ENCODE measurements at regions of chr17 and their contacts with region 1.

Region 1: GRCh38 chr17:781805-782731 is at the starts of genes GLOD4 and MRM3:
- DNase-seq: peak; percentile 99
- ATAC-seq: peak; percentile 96
- H3K4me3 Mint-ChIP-seq: peak within 1 kb of the TSS; percentile 98
- H3K27ac Mint-ChIP-seq: peak within 1 kb of the TSS; percentile 94
- H3K4me1 Mint-ChIP-seq: peaks cover 38% of the 10 kb centered on the region
- H3K27me3 Mint-ChIP-seq: no peaks in the 10 kb centered on the region
- CTCF ChIP-seq: no peak
- total RNA-seq, gene GLOD4: 51.4 and 51.9 TPM in 2 replicates
- total RNA-seq, gene MRM3: 23.3 and 26.3 TPM in 2 replicates

Region 2: DNA sequence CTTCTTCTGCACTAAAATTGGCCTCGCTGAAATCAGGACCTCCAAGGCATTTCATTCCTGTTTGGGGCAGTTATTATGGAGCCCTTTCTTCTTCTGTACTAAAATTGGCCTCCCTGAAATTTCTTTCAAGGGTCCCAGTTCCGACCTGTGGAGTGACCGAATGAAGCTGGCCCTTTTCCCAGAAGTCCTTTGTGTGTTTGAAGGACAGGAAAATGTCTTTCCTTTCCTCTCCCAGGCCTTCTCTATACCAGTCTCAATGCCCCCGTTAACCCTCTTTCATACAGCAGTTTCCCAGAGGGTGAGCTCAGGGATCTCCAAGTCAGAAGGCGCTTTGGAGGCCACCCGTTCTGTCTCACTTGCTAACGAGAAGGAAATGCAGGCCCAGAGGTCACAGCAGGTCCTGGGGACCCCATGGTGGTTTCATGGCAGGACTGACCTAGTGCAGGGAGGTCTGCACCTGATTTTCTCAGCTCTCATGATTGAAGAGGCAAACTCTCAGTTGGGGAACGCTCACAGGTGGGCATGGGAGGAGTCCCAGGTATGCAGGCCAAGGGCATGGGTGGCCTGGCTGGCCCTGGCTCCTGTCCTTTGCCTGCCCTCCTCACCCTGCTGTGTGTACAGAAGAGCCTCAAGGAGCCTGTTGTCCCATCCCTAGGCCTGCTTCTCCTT is 563.5 kb before region 1 on chr17:
- CTCF ChIA-PET with region 1: no interaction called
- POLR2A ChIA-PET with region 1: no interaction called
- intact Hi-C with region 1: loop called (anchors 10 kb)
- DNase-seq: no peak
- ATAC-seq: no peak
- H3K4me3 Mint-ChIP-seq: no peak overlapping the region
- H3K27ac Mint-ChIP-seq: no peak overlapping the region
- H3K4me1 Mint-ChIP-seq: peaks cover 8% of the 10 kb centered on the region
- H3K27me3 Mint-ChIP-seq: no peaks in the 10 kb centered on the region
- CTCF ChIP-seq: no peak

Region 3: DNA sequence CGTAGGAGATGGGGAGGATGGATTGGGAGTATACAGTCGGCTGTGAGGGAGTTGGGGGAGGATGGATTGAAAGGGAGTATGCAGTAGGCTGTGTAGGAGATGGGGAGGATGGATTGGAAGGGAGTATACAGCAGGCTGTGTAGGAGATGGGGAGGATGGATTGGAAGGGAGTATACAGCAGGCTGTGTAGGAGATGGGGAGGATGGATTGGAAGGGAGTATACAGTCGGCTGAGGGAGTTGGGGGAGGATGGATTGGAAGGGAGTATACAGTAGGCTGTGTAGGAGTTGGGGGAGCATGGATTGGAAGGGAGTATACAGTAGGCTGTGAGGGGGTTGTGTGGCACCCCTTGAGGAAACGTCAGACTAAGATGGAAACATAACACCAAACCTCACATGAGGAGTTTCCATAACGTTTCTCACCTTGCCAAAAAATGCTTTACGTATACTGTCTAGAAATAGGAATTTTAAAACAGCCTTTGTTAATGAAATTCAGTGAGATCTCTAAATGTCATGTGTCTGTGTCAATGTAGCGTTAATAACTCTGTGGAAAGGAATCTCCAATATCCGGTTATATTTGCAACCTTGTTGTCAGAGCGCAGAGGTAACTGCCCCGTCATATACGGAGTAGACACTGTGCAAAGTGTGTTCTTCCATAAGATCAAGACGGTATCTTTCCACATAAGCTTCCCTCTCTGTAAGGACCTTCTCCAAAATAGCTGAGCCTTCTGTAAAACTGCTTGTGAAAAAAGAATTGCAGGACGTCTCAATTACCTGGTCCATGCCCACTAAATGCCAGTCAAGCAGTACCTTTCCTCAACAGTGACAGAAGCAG is 61.1 kb before region 1 on chr17:
- CTCF ChIA-PET with region 1: no interaction called
- POLR2A ChIA-PET with region 1: interaction called, 10 read pairs
- intact Hi-C with region 1: no loop called
- DNase-seq: no peak
- ATAC-seq: no peak
- H3K4me3 Mint-ChIP-seq: no peak overlapping the region
- H3K27ac Mint-ChIP-seq: no peak overlapping the region
- H3K4me1 Mint-ChIP-seq: peaks cover 3% of the 10 kb centered on the region
- H3K27me3 Mint-ChIP-seq: no peaks in the 10 kb centered on the region
- CTCF ChIP-seq: no peak

Region 4: DNA sequence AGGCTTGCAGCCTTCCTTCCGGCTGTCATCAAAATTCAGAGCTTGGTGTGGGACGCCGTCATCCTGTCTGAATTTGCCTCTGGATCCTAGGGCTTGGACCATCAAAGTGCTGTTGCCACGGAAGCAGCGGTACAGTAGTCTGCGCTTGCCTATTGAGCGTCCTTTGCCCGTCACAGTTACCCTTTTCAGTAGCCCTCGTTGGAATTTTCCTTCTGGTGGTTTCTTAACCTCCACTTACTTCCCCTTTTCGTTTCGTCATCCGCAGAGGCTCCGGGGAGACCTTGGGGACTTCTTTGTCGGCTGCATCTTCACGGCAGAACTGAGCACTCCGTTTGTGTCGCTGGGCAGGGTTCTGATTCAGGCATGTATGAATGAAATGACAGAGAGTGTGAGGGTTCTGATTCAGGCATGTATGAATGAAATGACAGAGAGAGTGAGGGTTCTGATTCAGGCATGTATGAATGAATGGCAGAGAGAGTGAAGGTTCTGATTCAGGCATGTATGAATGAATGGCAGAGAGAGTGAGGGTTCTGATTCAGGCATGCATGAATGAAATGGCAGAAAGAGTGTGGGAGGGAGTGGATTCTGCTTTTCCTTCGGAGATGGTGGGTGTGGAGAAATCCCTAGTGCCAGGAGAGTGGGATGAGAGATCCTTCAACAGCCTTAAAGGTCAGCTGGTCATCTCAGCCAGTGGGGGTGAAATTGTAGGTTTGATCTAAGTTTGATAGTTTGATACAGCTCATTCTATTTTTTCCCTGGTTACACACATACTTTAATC is 41.6 kb before region 1 on chr17:
- CTCF ChIA-PET with region 1: no interaction called
- POLR2A ChIA-PET with region 1: interaction called, 3 read pairs
- intact Hi-C with region 1: loop called (anchors 1 kb)
- DNase-seq: peak; percentile 66
- ATAC-seq: peak; percentile 95
- H3K4me3 Mint-ChIP-seq: peak overlapping the region; percentile 76
- H3K27ac Mint-ChIP-seq: peak overlapping the region; percentile 94
- H3K4me1 Mint-ChIP-seq: peaks cover 25% of the 10 kb centered on the region
- H3K27me3 Mint-ChIP-seq: no peaks in the 10 kb centered on the region
- CTCF ChIP-seq: no peak

Region 5: GRCh38 chr17:1275962-1276736 is 494.1 kb after region 1 on chr17:
- CTCF ChIA-PET with region 1: no interaction called
- POLR2A ChIA-PET with region 1: no interaction called
- intact Hi-C with region 1: no loop called
- DNase-seq: peak; percentile 65
- ATAC-seq: peak; percentile 87
- H3K4me3 Mint-ChIP-seq: peak overlapping the region; percentile 65
- H3K27ac Mint-ChIP-seq: no peak overlapping the region
- H3K4me1 Mint-ChIP-seq: peaks cover 12% of the 10 kb centered on the region
- H3K27me3 Mint-ChIP-seq: peaks cover 8% of the 10 kb centered on the region
- CTCF ChIP-seq: peak; percentile 16

Measured in activated B cell treated with CpG ODN at 0.5 μM for 24 hours (primary cell).